Activated CD8-positive, alpha-beta T cell treated with anti-CD3 and anti-CD28 coated beads, Interleukin-2, amount 10 ng/mL, durations not matched to agents 7 days and 5 days (primary cell): ENCODE measurements at regions of chr13 and their contacts with region 1.

Region 1: DNA sequence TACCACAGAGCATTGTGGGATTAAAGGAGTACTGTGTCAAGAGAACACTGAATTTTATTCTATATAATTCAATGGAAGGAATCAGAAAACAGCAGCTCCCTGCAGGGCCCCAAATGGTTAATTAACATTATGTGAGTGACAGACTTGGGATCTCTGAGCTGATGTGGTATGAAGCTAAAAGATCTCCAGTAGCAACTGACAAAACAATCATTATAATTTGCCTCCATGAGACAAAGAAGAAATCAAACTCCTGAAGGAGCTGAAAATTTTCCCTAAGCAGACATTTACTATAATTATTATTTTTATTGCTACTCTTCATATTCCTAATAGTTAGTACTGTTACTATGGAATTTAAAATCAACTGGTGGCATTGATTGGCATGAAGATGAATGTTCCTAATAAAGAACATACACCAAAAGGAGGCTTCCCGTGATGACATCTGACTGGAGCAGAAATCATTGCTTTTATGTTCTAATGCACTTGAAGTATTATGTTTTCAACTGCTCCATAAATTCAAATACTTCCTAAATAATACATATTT is 28.8 kb upstream of the RFC3 start:
- DNase-seq: no peak
- ATAC-seq: no peak
- H3K4me3 Mint-ChIP-seq: no peak overlapping the region
- H3K27ac Mint-ChIP-seq: no peak overlapping the region
- H3K4me1 Mint-ChIP-seq: peaks cover 16% of the 10 kb centered on the region
- H3K27me3 Mint-ChIP-seq: peaks cover 11% of the 10 kb centered on the region

Region 2: GRCh38 chr13:33388286-33388998 is 400.7 kb before region 1 on chr13:
- CTCF ChIA-PET with region 1: no interaction called
- POLR2A ChIA-PET with region 1: no interaction called
- DNase-seq: no peak
- ATAC-seq: no peak
- H3K4me3 Mint-ChIP-seq: no peak overlapping the region
- H3K27ac Mint-ChIP-seq: no peak overlapping the region
- H3K4me1 Mint-ChIP-seq: no peaks in the 10 kb centered on the region
- H3K27me3 Mint-ChIP-seq: peaks cover 1% of the 10 kb centered on the region

Region 3: GRCh38 chr13:33799950-33800592 is 10.9 kb after region 1 on chr13:
- CTCF ChIA-PET with region 1: interaction called, 10 read pairs
- POLR2A ChIA-PET with region 1: no interaction called
- DNase-seq: no peak
- ATAC-seq: no peak
- H3K4me3 Mint-ChIP-seq: no peak overlapping the region
- H3K27ac Mint-ChIP-seq: no peak overlapping the region
- H3K4me1 Mint-ChIP-seq: peaks cover 4% of the 10 kb centered on the region
- H3K27me3 Mint-ChIP-seq: peaks cover 14% of the 10 kb centered on the region

Region 4: DNA sequence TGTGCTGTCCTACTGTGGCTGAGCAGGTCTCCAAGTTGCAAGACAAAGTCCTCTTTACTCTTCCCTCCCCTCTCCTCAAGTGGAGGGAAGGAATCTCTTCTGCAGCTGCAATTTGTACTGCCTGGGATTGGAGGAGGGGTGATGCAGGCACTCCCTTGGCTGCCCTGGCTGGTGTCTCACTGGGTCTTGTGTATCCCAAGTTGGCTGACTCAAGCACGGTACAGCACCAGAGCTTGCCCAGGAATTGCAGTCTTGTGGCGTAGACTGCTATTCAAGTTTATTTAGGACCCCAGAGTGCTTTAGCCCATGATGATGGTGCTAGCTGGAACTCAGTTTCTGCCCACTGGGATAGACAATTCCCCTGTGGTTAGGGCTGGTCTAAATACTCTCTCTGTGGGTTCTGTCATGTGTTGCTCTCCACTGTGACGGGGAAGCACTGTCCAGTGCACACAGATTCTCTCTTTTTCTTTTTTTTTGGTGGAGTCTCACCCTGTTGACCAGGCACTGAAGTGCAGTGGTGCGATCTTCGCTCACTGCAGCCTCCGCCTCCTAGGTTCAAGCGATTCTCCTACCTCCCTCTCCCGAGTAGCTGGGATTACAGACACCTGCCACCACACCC is 57.4 kb after region 1 on chr13:
- CTCF ChIA-PET with region 1: no interaction called
- POLR2A ChIA-PET with region 1: no interaction called
- DNase-seq: no peak
- ATAC-seq: no peak
- H3K4me3 Mint-ChIP-seq: no peak overlapping the region
- H3K27ac Mint-ChIP-seq: no peak overlapping the region
- H3K4me1 Mint-ChIP-seq: no peaks in the 10 kb centered on the region
- H3K27me3 Mint-ChIP-seq: no peaks in the 10 kb centered on the region